CD4-positive, alpha-beta memory T cell (primary cell): ENCODE measurements at regions of chr12 and their contacts with region 1.

Region 1: GRCh38 chr12:123713398-123713797 is 1.2 kb downstream of the ATP6V0A2 start:
- DNase-seq: peak in 2 of 5 donors; percentile 1 to 8
- H3K4me3 ChIP-seq: peak overlapping the region; percentile 27 to 85
- H3K4me3 Mint-ChIP-seq: peak overlapping the region; percentile 84 to 97 (median 90)
- H3K27ac ChIP-seq: peak overlapping the region; percentile 60
- H3K27ac Mint-ChIP-seq: peak overlapping the region; percentile 84 to 93 (median 90)
- H3K4me1 ChIP-seq: peaks cover 34% of the 10 kb centered on the region
- H3K4me1 Mint-ChIP-seq: peaks cover 27 to 40% (median 35%) of the 10 kb centered on the region in 4 donors
- H3K27me3 ChIP-seq: no peaks in the 10 kb centered on the region
- H3K27me3 Mint-ChIP-seq: no peaks in the 10 kb centered on the region

Region 2: DNA sequence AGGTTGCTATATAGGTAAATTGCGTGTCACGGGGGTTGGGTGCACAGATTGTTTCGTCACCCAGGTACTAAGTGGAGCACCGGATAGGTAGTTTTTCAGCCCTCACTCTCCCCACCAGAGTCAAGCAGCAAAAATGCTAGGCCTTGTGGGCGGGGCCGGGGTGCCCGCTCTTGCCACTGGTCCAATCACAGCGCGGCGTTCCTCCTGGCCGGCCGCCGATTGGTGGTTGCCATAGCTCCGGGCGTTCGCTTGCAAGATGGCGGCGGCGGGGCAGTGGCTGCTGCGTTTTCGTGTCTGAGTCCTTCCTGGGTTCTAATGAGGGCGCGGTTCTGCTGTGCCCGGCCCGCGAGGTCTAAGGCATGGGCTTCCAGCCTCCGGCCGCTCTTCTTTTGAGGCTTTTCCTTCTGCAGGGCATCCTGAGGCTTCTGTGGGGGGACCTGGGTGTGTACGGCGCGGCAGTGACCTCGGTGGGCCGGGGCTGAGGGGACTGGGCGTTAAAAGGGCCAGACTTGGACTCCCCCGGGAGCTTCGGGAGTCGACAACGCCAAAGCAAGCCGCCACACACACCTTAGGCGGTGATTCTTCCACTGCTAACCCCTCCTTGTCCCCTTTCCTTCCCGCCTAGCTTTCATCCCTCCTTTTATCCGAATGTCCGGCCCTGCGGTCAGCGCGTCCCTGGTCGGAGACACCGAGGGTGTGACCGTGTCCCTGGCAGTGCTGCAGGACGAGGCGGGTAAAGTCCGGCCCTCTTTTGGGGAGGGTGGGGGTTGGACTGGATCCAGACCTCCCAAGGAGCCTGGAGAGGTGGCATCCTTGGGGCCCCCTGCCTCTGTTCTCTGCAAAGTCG is 42.3 kb before region 1 on chr12 and contains the start of gene TCTN2:
- CTCF ChIA-PET with region 1: no interaction called
- POLR2A ChIA-PET with region 1: interaction called, 14 read pairs
- intact Hi-C with region 1: loop called (anchors 1 kb)
- DNase-seq: peak; percentile 90 to 95 (median 92)
- H3K4me3 ChIP-seq: peak within 1 kb of the TSS; percentile 69 to 92
- H3K4me3 Mint-ChIP-seq: peak within 1 kb of the TSS; percentile 84 to 93 (median 90)
- H3K27ac ChIP-seq: peak within 1 kb of the TSS; percentile 45
- H3K27ac Mint-ChIP-seq: peak within 1 kb of the TSS; percentile 70 to 87 (median 82)
- H3K4me1 ChIP-seq: peaks cover 12% of the 10 kb centered on the region
- H3K4me1 Mint-ChIP-seq: peaks cover 11 to 18% (median 13%) of the 10 kb centered on the region in 4 donors
- H3K27me3 ChIP-seq: no peaks in the 10 kb centered on the region
- H3K27me3 Mint-ChIP-seq: no peaks in the 10 kb centered on the region
- total RNA-seq, gene TCTN2: 8.1 to 10.0 TPM

Region 3: DNA sequence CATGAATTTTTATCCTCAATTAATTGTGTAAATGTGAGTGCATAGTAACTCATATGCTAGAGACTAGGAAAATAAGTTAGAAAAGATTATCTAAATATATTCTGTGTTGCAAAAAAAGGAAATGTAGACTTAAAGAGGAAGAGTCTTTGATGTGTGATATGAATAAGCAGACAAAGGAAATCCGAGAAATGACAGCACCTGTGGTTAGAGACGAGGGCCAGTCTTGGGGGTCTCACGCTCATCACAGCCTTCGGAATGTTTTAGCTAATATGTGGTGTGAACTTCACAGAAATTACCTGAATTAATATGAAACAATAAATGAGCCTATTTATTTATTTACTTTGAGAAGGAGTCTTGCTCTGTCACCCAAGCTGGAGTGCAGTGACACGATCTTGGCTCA is 10.4 kb after region 1 on chr12:
- CTCF ChIA-PET with region 1: interaction called, 3 read pairs
- POLR2A ChIA-PET with region 1: interaction called, 10 read pairs
- intact Hi-C with region 1: no loop called
- DNase-seq: no peak
- H3K4me3 ChIP-seq: no peak overlapping the region
- H3K4me3 Mint-ChIP-seq: peak overlapping the region in 3 of 8 donors; percentile 10 to 51 (median 32)
- H3K27ac ChIP-seq: no peak overlapping the region
- H3K27ac Mint-ChIP-seq: peak overlapping the region in 3 of 7 donors; percentile 41 to 61 (median 47)
- H3K4me1 ChIP-seq: no peaks in the 10 kb centered on the region
- H3K4me1 Mint-ChIP-seq: peaks cover 0 to 10% (median 2%) of the 10 kb centered on the region in 4 donors
- H3K27me3 ChIP-seq: no peaks in the 10 kb centered on the region
- H3K27me3 Mint-ChIP-seq: no peaks in the 10 kb centered on the region